ENCODE measurements at regions of chr1 and their contacts with region 1.

Region 1: DNA sequence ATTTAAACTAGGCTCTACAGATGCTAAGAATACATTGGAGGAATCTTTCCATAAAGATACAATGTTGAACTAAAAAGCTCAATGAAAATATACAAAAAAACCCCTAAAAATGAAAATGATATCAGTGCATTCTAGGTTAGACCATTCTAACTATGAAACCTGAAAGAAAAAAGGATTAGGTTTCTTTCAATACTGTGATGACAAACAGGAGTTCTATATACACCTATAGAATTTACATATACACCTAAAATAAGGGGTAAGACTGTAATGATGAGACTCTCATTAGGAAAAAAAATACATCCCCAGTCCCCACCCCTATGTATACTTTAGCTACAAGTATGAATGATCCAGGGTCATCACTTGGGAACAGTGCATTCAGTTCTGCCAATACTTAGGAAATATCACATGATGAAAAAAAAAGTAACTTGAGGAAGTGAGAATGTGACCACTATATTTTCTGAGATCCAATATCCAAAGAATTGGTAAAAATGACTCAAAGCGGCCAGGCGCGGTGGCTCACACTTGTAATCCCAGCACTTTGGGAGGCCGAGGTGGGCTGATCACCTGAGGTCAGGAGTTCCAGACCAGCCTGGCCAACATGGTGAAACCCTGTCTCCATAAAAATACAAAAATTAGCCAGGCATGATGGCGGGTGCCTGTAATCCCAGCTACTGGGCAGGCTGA is 26.3 kb downstream of the SELENOF start:
- DNase-seq: no peak
- ATAC-seq: no peak
- H3K4me3 ChIP-seq: no peak overlapping the region
- H3K4me3 Mint-ChIP-seq: no peak overlapping the region
- H3K27ac ChIP-seq: no peak overlapping the region
- H3K27ac Mint-ChIP-seq: no peak overlapping the region
- H3K4me1 ChIP-seq: no peaks in the 10 kb centered on the region
- H3K4me1 Mint-ChIP-seq: peaks cover 43% of the 10 kb centered on the region
- H3K27me3 ChIP-seq: no peaks in the 10 kb centered on the region
- H3K27me3 Mint-ChIP-seq: no peaks in the 10 kb centered on the region
- CTCF ChIP-seq: no peak

Region 2: GRCh38 chr1:86940599-86940998 is 53.0 kb after region 1 on chr1:
- CTCF ChIA-PET with region 1: no interaction called
- POLR2A ChIA-PET with region 1: no interaction called
- intact Hi-C with region 1: loop called in 1 of 2 experiments (anchors 2 kb)
- DNase-seq: no peak
- ATAC-seq: no peak
- H3K4me3 ChIP-seq: no peak overlapping the region
- H3K4me3 Mint-ChIP-seq: no peak overlapping the region
- H3K27ac ChIP-seq: no peak overlapping the region
- H3K27ac Mint-ChIP-seq: no peak overlapping the region
- H3K4me1 ChIP-seq: no peaks in the 10 kb centered on the region
- H3K4me1 Mint-ChIP-seq: peaks cover 6% of the 10 kb centered on the region
- H3K27me3 ChIP-seq: no peaks in the 10 kb centered on the region
- H3K27me3 Mint-ChIP-seq: no peaks in the 10 kb centered on the region
- CTCF ChIP-seq: no peak

Measured in CD4-positive, alpha-beta T cell (primary cell).